ENCODE measurements at regions of chr12 and their contacts with region 1.

Region 1: GRCh38 chr12:122399592-122400373 is 22.7 kb downstream of the CLIP1 start:
- DNase-seq: peak; percentile 67
- H3K4me3 Mint-ChIP-seq: peak overlapping the region; percentile 27
- H3K27ac Mint-ChIP-seq: peak overlapping the region; percentile 77
- H3K4me1 Mint-ChIP-seq: peaks cover 48% of the 10 kb centered on the region
- H3K27me3 Mint-ChIP-seq: no peaks in the 10 kb centered on the region

Region 2: DNA sequence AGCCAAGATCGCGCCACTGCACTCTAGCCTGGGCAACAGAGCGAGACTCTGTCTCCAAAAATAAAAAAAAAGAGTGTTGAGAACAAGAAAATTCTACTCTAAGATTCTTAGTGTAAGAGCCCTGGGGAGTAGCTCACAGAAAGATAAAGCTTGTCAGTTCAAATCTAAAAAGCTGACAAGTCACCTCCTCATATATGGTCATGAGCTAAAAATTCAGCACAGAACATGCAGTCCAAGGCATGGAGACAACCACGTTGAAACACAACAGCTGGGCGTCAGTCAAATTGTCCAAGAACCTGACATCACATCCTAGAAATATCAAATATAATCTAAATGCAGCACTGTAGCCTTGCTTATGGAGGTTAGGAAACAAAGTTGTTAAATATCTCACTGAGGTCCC is 25.1 kb before region 1 on chr12:
- CTCF ChIA-PET with region 1: interaction called, 10 read pairs
- POLR2A ChIA-PET with region 1: no interaction called
- intact Hi-C with region 1: no loop called
- DNase-seq: no peak
- H3K4me3 Mint-ChIP-seq: no peak overlapping the region
- H3K27ac Mint-ChIP-seq: no peak overlapping the region
- H3K4me1 Mint-ChIP-seq: peaks cover 7% of the 10 kb centered on the region
- H3K27me3 Mint-ChIP-seq: no peaks in the 10 kb centered on the region

Region 3: DNA sequence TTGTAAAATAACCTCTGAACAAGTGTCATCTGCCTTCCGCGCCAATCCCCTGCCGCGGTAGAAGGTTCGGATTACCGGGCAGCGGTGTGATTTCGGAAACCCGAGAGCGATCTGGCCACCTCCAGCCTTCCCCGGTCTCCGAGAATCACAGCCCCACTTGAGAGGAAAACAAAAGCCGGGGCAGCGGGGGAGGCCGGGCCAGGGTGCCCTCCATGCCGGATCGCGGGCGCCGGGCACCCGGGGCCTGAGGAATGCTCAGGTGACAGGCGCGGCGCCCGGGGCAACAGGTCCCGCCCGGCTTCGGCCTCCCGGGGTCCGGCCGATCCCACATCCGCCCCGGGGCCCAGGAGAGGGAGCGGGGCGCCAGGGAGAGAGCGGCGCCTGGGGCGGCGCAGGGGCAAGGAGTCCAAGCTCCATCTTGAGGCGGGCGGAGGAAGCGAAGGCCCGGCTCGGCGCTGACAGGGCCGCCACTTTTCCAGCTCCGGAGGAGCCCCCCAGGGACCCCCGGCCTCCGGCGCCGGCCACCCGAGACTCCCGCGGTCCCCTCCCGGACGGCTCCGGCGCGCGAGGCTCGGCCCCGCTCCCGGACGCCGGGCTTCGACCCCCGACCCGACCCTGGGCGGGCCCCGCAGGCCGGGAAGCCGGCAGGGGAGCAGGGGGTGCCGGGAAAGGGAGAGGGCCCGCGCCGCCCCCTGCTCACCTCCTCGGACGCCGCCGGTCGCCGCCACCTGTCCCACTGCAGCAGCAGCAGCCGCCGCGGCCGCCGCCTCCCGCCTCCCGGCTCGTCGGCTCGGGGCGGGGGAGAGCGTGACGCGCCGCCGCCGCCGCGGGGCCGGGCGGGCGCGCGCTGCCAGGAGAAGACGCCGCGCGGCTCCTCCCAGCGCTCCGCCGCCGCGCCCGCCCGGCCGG is 22.3 kb after region 1 on chr12 and contains the start of gene CLIP1:
- CTCF ChIA-PET with region 1: interaction called, 33 read pairs
- POLR2A ChIA-PET with region 1: interaction called, 11 read pairs
- intact Hi-C with region 1: loop called (anchors 1 kb)
- DNase-seq: peak; percentile 68
- H3K4me3 Mint-ChIP-seq: peak within 1 kb of the TSS; percentile 93
- H3K27ac Mint-ChIP-seq: peak within 1 kb of the TSS; percentile 92
- H3K4me1 Mint-ChIP-seq: peaks cover 48% of the 10 kb centered on the region
- H3K27me3 Mint-ChIP-seq: no peaks in the 10 kb centered on the region
- total RNA-seq, gene CLIP1: 69.2 to 71.8 TPM

Region 4: GRCh38 chr12:122452701-122453285 is 53.0 kb after region 1 on chr12:
- CTCF ChIA-PET with region 1: interaction called, 7 read pairs
- POLR2A ChIA-PET with region 1: interaction called, 3 read pairs
- intact Hi-C with region 1: loop called (anchors 1 kb)
- DNase-seq: peak; percentile 23
- H3K4me3 Mint-ChIP-seq: peak overlapping the region; percentile 70
- H3K27ac Mint-ChIP-seq: peak overlapping the region; percentile 92
- H3K4me1 Mint-ChIP-seq: peaks cover 29% of the 10 kb centered on the region
- H3K27me3 Mint-ChIP-seq: no peaks in the 10 kb centered on the region

Region 5: GRCh38 chr12:122526683-122527477 is 127.1 kb after region 1 on chr12 and contains the starts of genes KNTC1 and RSRC2:
- CTCF ChIA-PET with region 1: interaction called, 13 read pairs
- POLR2A ChIA-PET with region 1: interaction called, 3 read pairs
- intact Hi-C with region 1: no loop called
- DNase-seq: peak; percentile 99
- H3K4me3 Mint-ChIP-seq: no peak within 1 kb of the TSS
- H3K27ac Mint-ChIP-seq: no peak within 1 kb of the TSS
- H3K4me1 Mint-ChIP-seq: peaks cover 36% of the 10 kb centered on the region
- H3K27me3 Mint-ChIP-seq: no peaks in the 10 kb centered on the region
- total RNA-seq, gene KNTC1: 136 to 147 TPM
- total RNA-seq, gene RSRC2: 106 to 115 TPM